Dorsolateral prefrontal cortex (tissue), 120 donors: ENCODE measurements at regions of chr20 and their contacts with region 1.

Region 1: GRCh38 chr20:7935027-7935551 is 5.2 kb downstream of the HAO1 start:
- DNase-seq: no peak
- H3K4me3 ChIP-seq: no peak overlapping the region
- H3K27ac ChIP-seq: peak overlapping the region in 8 of 59 donors; percentile 2 to 77 (median 60)
- H3K27me3 ChIP-seq: no peaks in the 10 kb centered on the region
- CTCF ChIP-seq: no peak

Region 2: DNA sequence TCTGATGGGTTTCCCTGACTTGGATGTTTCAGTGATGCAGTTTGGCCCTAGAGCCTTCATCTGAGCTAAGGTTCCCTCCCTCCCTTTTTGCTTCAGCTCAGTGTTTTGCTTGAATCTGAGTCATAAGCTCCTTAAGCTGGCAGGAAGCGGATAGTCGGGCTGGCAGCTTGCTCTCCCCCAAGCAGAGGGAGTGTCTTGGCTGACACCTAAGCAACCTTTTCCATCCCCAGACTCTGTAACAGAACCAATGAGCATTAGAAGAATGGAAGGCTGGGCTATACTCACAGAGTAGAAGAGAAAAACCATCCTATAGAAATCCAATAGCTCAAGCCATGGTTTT is 93.1 kb before region 1 on chr20:
- intact Hi-C with region 1: no loop called
- DNase-seq: no peak
- H3K4me3 ChIP-seq: no peak overlapping the region
- H3K27ac ChIP-seq: no peak overlapping the region
- H3K27me3 ChIP-seq: no peaks in the 10 kb centered on the region
- CTCF ChIP-seq: no peak

Region 3: GRCh38 chr20:7967199-7967844 is 32.2 kb after region 1 on chr20:
- intact Hi-C with region 1: no loop called
- DNase-seq: no peak
- H3K4me3 ChIP-seq: no peak overlapping the region
- H3K27ac ChIP-seq: no peak overlapping the region
- H3K27me3 ChIP-seq: peaks cover 0 to 5% (median 0%) of the 10 kb centered on the region in 45 donors
- CTCF ChIP-seq: no peak

Region 4: DNA sequence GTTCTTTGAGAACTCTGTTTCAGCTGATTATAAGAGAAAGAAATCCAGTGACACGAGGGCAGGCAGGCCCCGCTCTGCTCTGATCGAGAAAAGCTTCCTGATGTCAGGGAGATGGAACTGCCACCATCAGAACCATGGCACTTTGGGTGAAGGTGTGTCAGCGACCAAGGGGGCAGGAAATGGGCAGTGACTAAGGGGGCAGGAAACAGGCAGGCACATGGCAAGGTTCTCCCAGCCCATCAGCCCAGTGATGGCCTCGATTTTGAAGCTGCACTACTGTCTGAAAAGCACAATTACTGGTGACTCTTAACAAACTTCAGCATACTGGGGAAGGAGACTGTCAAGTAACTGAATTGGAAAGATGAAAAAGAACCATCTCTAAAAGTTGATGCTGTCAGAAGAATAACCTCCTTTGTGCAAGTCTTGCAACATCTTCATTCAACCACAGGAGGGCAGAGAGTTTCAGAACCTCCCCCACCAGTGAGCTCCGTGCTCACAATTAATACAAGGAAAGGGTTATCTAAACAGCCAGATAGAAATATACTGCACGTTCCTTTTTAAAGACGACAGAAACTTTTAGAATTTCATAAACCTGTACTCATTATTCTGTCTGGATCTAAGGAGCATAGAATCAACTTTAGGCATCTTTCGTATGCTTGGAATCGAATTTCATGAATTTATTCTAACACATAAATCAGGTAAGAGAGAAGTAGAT is 45.4 kb after region 1 on chr20:
- intact Hi-C with region 1: loop called in 1 of 2 experiments (anchors 5 kb)
- DNase-seq: peak in 1 of 10 donors; percentile 39
- H3K4me3 ChIP-seq: no peak overlapping the region
- H3K27ac ChIP-seq: peak overlapping the region in 2 of 59 donors; percentile 4 to 11
- H3K27me3 ChIP-seq: no peaks in the 10 kb centered on the region
- CTCF ChIP-seq: peak; percentile 28 to 74 (median 59)

Region 5: DNA sequence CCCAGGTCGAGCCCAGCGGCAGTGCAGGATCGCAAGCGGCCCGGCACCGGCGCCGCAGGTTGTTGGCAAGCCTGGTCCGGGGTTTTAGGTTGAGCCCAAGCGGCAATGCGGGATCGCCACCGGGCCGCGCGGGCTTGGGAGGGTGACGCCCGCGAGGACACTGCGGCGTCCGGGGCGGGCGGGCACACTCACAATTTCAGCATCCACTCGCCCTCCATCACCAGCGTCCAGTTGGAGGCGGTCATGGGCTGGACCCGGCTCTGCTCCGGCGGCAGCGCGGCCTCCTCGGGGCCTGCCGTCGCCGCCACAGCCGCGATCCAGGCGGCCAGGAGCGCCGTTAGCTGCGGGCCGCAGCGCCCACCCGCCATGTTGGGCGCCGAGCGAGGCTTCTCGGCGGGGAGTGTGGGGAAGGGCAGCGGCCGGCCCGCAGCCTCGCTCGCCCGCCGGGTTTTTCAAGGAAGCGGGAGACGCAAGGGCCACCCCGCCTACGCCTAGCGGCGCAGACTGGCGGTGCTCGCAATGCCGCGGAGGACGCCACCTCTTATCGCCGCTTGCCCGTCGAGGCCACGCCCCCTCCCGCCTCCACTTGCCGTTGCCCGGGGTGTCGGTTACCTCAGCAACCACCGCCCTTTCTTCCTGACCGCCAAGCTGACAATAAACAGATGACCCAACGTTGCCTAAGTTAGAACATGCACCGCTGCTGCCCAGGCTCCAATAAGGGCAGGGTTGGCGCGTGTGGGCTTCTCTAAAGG is 84.3 kb after region 1 on chr20 and contains the start of gene TMX4:
- intact Hi-C with region 1: loop called (anchors 5 to 10 kb)
- DNase-seq: peak; percentile 92 to 98 (median 95)
- H3K4me3 ChIP-seq: peak within 1 kb of the TSS; percentile 51 to 97 (median 87)
- H3K27ac ChIP-seq: peak within 1 kb of the TSS; percentile 78 to 100 (median 99)
- H3K27me3 ChIP-seq: no peaks in the 10 kb centered on the region
- CTCF ChIP-seq: peak in 46 of 56 donors; percentile 12 to 58 (median 40)
- total RNA-seq, gene TMX4: 44.7 to 172 (median 104) TPM

Region 6: DNA sequence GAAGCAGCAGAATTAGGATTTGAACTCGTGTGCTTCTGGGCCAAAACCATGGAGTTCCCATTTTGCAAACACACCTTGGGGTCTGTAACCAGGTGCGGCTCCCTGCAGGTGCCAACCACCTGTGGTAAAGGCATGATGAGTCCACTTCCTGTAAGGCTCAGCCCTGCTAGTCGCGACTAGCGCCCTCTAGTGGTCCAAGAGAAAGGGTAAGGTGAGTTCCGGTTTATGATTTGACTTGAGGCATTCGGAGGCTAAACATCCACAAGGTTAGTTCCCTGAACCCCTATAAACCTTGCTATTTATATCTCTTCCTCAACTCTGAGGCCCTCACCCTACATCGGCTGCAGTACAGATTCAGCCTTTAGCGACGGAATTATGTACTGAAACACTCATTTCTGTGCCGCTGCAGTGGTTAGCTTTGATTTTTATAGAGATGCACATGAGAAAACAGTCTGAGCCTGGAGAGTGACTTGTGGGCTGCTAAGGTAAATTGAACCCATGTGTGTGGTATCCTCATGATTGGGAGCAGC is 370.4 kb after region 1 on chr20:
- intact Hi-C with region 1: no loop called
- DNase-seq: peak in 3 of 10 donors; percentile 16 to 45 (median 42)
- H3K4me3 ChIP-seq: peak overlapping the region in 1 of 59 donors; percentile 6
- H3K27ac ChIP-seq: peak overlapping the region in 28 of 59 donors; percentile 5 to 69 (median 31)
- H3K27me3 ChIP-seq: no peaks in the 10 kb centered on the region
- CTCF ChIP-seq: peak; percentile 28 to 67 (median 53)